Endothelial cell of umbilical vein (primary cell): ENCODE measurements at regions of chr13 and their contacts with region 1.

Region 1: DNA sequence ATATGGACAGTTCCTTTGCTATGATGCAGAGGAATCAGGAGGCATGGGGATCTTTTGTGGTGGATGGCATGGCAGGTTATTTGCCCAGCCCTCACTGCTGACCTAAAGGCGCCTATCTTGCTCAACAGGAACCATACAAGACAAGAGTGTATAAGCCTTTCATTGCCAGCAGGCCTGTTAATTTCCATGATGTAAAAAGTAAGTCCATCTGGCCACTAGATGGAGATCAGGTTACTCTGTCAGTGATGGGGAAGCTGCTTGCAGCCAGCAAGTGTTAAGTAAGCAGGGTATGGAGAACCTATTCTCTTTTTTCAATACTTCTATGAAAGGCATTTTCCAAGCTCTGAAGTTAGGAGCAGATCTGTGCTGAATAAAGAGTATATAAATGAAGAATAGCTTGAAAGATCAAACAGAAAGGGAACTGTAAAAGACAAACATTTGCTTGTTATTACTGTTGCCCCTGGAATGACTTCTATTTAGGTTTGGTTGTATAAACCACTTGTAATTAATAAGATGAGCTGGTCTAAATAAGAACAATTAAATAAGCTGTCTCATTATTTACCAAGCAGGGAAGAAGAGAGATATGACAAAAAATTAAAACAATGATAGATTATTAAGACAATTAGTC is 210.9 kb downstream of the RGCC start:
- DNase-seq: peak; percentile 94
- H3K4me3 ChIP-seq: no peak overlapping the region
- H3K27ac ChIP-seq: no peak overlapping the region
- H3K4me1 ChIP-seq: no peaks in the 10 kb centered on the region
- H3K27me3 ChIP-seq: no peaks in the 10 kb centered on the region
- CTCF ChIP-seq: peak; percentile 54 to 67
- POLR2A ChIP-seq: no peak

Region 2: GRCh38 chr13:40697711-40698110 is 970.5 kb before region 1 on chr13:
- CTCF ChIA-PET with region 1: no interaction called
- POLR2A ChIA-PET with region 1: no interaction called
- dilution Hi-C with region 1: no loop called
- intact Hi-C with region 1: no loop called
- DNase-seq: no peak
- H3K4me3 ChIP-seq: no peak overlapping the region
- H3K27ac ChIP-seq: no peak overlapping the region
- H3K4me1 ChIP-seq: peaks cover 3% of the 10 kb centered on the region
- H3K27me3 ChIP-seq: no peaks in the 10 kb centered on the region
- CTCF ChIP-seq: no peak
- POLR2A ChIP-seq: no peak

Region 3: GRCh38 chr13:41678249-41678648 is 10.0 kb after region 1 on chr13:
- CTCF ChIA-PET with region 1: interaction called, 18 read pairs
- POLR2A ChIA-PET with region 1: no interaction called
- dilution Hi-C with region 1: no loop called
- intact Hi-C with region 1: no loop called
- DNase-seq: no peak
- H3K4me3 ChIP-seq: no peak overlapping the region
- H3K27ac ChIP-seq: no peak overlapping the region
- H3K4me1 ChIP-seq: peaks cover 4% of the 10 kb centered on the region
- H3K27me3 ChIP-seq: no peaks in the 10 kb centered on the region
- CTCF ChIP-seq: no peak
- POLR2A ChIP-seq: no peak

Region 4: DNA sequence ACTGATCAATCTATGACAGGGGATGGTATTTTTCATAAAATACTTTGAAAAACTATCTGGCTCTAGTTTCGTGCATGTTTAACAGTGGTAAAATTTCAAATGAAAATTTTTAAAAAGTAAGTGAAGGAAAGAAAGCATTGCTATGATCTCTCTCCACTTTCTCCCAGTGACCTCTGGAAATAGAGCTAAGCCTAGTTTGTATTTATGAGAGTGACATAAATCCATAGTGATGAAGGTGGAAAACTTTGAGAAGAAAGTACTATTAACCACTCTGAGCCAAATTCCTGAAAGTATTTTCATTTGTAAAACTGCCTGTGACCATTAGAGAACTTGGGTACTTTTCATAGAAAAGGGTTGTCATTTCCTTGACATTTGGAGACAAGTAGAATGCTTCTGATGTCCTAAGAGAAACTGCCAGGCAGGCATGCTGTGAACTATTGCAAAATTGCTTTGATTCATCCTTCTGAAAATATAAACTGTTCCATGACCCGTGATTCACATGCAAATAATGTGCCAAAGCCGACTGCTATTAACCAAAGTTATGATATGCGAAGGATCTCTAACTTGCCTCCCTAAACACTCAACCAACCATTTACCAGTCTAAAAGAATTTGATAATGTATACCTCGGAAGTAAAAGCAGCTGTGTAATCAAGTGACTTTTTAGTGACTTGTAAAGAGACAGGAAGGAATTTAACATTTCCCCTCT is 159.4 kb after region 1 on chr13:
- CTCF ChIA-PET with region 1: interaction called, 12 read pairs
- POLR2A ChIA-PET with region 1: no interaction called
- dilution Hi-C with region 1: no loop called
- intact Hi-C with region 1: no loop called
- DNase-seq: peak; percentile 87
- H3K4me3 ChIP-seq: peak overlapping the region in 1 of 3 experiments; percentile 16
- H3K27ac ChIP-seq: peak overlapping the region; percentile 76
- H3K4me1 ChIP-seq: peaks cover 20% of the 10 kb centered on the region
- H3K27me3 ChIP-seq: no peaks in the 10 kb centered on the region
- CTCF ChIP-seq: no peak
- POLR2A ChIP-seq: no peak

Region 5: DNA sequence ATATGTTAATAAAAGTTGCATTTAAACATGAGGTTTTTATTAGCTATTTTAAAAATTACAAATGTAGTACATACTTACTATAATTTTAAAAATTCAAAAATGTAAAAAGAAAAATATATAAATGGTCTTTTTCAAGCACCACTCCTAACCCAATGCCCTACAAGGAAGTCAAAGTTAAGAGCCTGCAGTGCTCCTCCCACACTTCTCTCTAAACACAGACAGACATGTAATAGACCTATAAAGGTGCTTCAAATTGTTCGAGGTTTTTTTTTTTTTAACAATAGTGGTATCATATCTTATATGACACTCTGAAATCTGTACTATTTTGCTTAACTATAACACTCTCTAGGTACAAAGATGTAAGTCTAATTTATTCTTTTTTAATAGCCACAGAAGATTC is 267.3 kb after region 1 on chr13:
- CTCF ChIA-PET with region 1: interaction called, 11 read pairs
- POLR2A ChIA-PET with region 1: no interaction called
- dilution Hi-C with region 1: no loop called
- intact Hi-C with region 1: no loop called
- DNase-seq: no peak
- H3K4me3 ChIP-seq: no peak overlapping the region
- H3K27ac ChIP-seq: no peak overlapping the region
- H3K4me1 ChIP-seq: no peaks in the 10 kb centered on the region
- H3K27me3 ChIP-seq: no peaks in the 10 kb centered on the region
- CTCF ChIP-seq: no peak
- POLR2A ChIP-seq: no peak

Region 6: DNA sequence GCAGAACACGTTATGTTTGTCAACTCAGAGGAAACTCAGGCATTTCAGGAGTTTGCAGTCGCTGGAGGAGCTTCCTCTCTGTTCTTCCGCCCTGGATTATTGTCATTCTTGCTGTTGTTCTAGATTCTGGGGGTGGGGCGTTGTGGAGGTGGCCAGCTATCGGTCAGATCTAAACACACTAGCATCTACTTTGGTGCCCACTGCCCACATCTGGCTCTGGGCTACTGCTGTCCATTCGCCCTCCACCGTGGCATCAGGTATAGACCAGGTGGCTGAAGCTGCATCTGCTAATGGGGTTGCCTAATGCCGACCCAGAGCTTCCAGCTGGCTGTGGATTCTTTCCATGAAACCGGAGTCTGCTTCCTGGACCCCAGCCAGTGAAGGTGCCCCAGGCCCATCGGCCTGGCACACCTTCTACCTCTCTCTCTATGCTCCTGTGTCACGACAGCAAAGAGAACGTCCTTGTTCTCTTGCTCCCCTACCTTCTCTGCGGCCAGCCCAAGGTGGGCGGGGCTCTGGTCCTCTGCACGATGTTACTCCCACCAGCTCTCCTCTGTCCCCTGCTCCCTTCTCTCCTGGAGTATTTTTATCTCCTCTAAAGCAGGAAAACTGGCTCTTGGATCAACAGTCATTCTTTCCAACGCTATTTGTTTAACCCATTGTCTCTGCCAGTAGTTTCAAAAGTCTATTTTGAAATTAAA is 343.6 kb after region 1 on chr13:
- CTCF ChIA-PET with region 1: interaction called, 10 read pairs
- POLR2A ChIA-PET with region 1: no interaction called
- dilution Hi-C with region 1: no loop called
- intact Hi-C with region 1: no loop called
- DNase-seq: peak; percentile 29
- H3K4me3 ChIP-seq: no peak overlapping the region
- H3K27ac ChIP-seq: no peak overlapping the region
- H3K4me1 ChIP-seq: peaks cover 7% of the 10 kb centered on the region
- H3K27me3 ChIP-seq: peaks cover 0 to 1% of the 10 kb centered on the region in 2 experiments
- CTCF ChIP-seq: no peak
- POLR2A ChIP-seq: no peak

Region 7: DNA sequence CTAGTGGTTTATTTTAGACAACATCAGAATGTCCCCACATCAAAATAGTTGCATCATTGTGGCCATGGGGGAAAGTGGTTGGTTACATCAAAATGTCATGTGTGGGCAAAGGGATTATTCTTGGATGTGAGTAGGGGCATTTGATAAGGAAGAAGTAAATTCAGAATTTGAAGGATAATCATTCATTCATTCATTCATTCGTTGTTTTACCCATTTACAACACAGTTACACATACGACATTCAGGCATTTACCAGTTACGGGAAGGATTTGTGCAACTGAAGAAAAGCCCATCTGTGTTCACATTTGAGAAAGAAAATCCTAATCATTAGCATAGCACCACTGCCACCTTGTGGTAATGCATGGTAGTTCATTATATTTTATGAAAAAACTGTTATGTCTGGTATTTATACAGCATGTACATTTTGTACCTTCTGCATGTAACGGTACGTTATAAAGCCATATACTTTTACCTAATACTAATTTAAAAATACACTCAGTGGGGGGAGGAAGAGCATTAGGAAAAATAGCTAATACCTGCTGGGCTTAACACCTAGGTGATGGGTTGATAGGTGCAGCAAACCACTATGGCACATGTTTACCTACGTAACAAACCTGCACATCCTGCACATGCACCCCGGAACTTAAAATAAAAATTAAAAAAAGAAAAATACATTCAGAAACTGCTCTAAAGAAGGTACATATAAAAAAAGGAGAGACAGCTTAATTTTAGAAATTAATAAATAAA is 442.3 kb after region 1 on chr13:
- CTCF ChIA-PET with region 1: interaction called, 221 read pairs
- POLR2A ChIA-PET with region 1: no interaction called
- dilution Hi-C with region 1: loop called (anchors 25 kb)
- intact Hi-C with region 1: loop called (anchors 1 kb)
- DNase-seq: peak; percentile 84
- H3K4me3 ChIP-seq: no peak overlapping the region
- H3K27ac ChIP-seq: no peak overlapping the region
- H3K4me1 ChIP-seq: no peaks in the 10 kb centered on the region
- H3K27me3 ChIP-seq: no peaks in the 10 kb centered on the region
- CTCF ChIP-seq: peak; percentile 38 to 52
- POLR2A ChIP-seq: no peak